AG04449 (cell line): ENCODE measurements at regions of chr12 and their contacts with region 1.

Region 1: GRCh38 chr12:102095675-102096263 is 24.1 kb downstream of the NUP37 start:
- DNase-seq: no peak
- H3K4me3 ChIP-seq: no peak overlapping the region
- CTCF ChIP-seq: peak; percentile 39

Region 2: DNA sequence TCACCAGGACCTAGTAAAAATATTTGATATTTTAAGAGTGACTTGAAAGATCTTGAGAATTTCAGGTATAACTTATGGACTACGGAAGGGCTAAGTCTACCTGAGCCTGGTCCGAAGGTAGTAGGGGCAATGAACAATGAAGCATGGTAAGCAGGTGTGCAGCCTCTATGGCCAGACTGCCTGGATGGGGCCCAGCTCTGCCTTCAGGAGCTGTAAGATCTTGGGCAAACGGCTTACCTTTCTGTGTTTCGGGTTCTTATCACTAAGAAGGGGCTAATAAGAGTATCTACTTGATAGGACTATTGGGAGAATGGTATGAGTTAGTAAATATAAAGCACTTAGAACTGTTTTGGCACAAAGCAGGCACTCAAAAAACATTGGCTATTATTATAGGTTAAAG is 14.9 kb before region 1 on chr12:
- CTCF ChIA-PET with region 1: interaction called, 12 read pairs
- POLR2A ChIA-PET with region 1: no interaction called
- DNase-seq: no peak
- H3K4me3 ChIP-seq: no peak overlapping the region
- CTCF ChIP-seq: no peak

Region 3: GRCh38 chr12:102220736-102221135 is 125.0 kb after region 1 on chr12:
- CTCF ChIA-PET with region 1: no interaction called
- POLR2A ChIA-PET with region 1: no interaction called
- DNase-seq: no peak
- H3K4me3 ChIP-seq: no peak overlapping the region
- CTCF ChIP-seq: no peak